Pancreas (tissue), 10 donors: ENCODE measurements at regions of chr9 and their contacts with region 1.

Region 1: DNA sequence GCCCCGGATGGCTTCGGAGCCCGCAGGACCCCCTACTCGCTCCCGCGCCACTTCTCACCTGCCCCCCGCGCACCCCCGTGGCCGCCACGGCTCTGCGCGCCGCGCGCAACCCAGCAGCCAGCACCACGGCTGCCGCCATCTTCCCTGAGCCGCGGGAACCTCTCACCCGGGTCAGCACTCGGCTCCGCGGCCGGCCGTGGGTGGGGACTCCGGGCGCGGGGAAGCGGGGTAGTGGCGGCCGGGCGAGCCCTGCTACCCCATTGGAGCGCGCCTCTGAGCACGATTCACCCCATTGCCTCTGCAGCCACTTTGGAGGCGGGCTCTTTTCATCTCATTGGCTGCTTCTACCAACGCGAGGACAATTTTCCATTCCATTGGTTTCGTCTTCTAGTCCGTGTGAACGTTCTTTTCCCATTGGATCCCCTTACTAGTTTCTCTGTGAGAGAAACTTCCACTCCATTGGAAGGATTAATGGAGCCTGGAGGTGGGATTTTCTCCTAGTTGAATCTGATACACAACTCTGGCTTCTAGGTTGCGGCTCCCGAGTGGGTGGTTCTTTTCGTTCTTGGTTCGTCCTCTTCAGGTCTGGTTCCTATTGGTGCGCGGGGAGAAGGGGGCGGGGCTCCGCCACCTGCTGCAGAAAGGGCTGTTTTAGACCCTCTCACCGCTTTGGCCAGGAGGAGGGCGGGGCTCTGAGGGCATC is at the start of gene HINT2:
- DNase-seq: peak; percentile 94 to 98 (median 96)
- ATAC-seq: peak; percentile 87 to 94 (median 88)
- H3K4me3 ChIP-seq: peak within 1 kb of the TSS; percentile 39 to 97 (median 84)
- H3K27ac ChIP-seq: peak within 1 kb of the TSS; percentile 92 to 100 (median 97)
- H3K4me1 ChIP-seq: peaks cover 0 to 20% (median 9%) of the 10 kb centered on the region in 3 donors
- H3K27me3 ChIP-seq: no peaks in the 10 kb centered on the region
- CTCF ChIP-seq: no peak
- total RNA-seq, gene HINT2: 20.6 to 43.7 (median 29.7) TPM

Region 2: GRCh38 chr9:35756275-35757225 is 58.4 kb before region 1 on chr9:
- intact Hi-C with region 1: loop called in 1 of 3 experiments (anchors 10 kb)
- DNase-seq: peak; percentile 75 to 92 (median 82)
- ATAC-seq: peak; percentile 84 to 88 (median 86)
- H3K4me3 ChIP-seq: peak overlapping the region; percentile 46 to 72 (median 62)
- H3K27ac ChIP-seq: peak overlapping the region; percentile 90 to 95 (median 92)
- H3K4me1 ChIP-seq: peaks cover 5 to 15% (median 10%) of the 10 kb centered on the region in 3 donors
- H3K27me3 ChIP-seq: no peaks in the 10 kb centered on the region
- CTCF ChIP-seq: peak; percentile 45 to 57 (median 48)